Activated B cell treated with CpG ODN at 0.5 μM for 24 hours (primary cell): ENCODE measurements at regions of chr11 and their contacts with region 1.

Region 1: GRCh38 chr11:111982019-111982464 is 43.2 kb upstream of the DLAT start:
- DNase-seq: no peak
- ATAC-seq: peak; percentile 85
- H3K4me3 Mint-ChIP-seq: no peak overlapping the region
- H3K27ac Mint-ChIP-seq: no peak overlapping the region
- H3K4me1 Mint-ChIP-seq: peaks cover 7% of the 10 kb centered on the region
- H3K27me3 Mint-ChIP-seq: peaks cover 21% of the 10 kb centered on the region
- CTCF ChIP-seq: no peak

Region 2: GRCh38 chr11:111932611-111932950 is 49.5 kb before region 1 on chr11:
- CTCF ChIA-PET with region 1: interaction called, 39 read pairs
- POLR2A ChIA-PET with region 1: interaction called, 8 read pairs
- intact Hi-C with region 1: loop called (anchors 1 kb)
- DNase-seq: no peak
- ATAC-seq: no peak
- H3K4me3 Mint-ChIP-seq: no peak overlapping the region
- H3K27ac Mint-ChIP-seq: no peak overlapping the region
- H3K4me1 Mint-ChIP-seq: peaks cover 11% of the 10 kb centered on the region
- H3K27me3 Mint-ChIP-seq: peaks cover 6% of the 10 kb centered on the region
- CTCF ChIP-seq: no peak

Region 3: GRCh38 chr11:111938687-111939160 is 43.3 kb before region 1 on chr11:
- CTCF ChIA-PET with region 1: interaction called, 10 read pairs
- POLR2A ChIA-PET with region 1: interaction called, 4 read pairs
- intact Hi-C with region 1: no loop called
- DNase-seq: no peak
- ATAC-seq: peak; percentile 89
- H3K4me3 Mint-ChIP-seq: peak overlapping the region; percentile 77
- H3K27ac Mint-ChIP-seq: peak overlapping the region; percentile 31
- H3K4me1 Mint-ChIP-seq: peaks cover 29% of the 10 kb centered on the region
- H3K27me3 Mint-ChIP-seq: peaks cover 6% of the 10 kb centered on the region
- CTCF ChIP-seq: no peak